ENCODE measurements at regions of chr20 and their contacts with region 1.

Region 1: DNA sequence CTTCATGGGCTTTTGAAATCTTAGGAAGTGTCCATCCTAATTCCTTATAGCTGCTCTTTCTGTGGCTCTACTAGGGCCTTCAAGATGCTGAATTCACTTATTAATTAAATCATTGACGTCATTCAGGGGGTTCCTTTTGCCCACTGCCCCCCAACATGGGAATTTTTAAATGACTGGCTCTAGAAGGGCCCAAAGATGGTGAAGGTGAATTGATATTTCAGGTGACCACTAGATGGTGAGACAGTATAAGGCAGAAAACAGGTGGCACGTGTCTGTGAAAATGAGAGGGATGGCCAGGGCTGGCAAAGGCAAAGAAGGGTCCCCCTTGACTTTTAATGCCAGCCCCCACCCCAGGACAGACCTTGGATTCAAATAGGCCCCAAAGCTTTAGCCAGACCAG is 11.8 kb downstream of the GNAS start:
- DNase-seq: no peak
- ATAC-seq: peak; percentile 57 to 77; a peak in 3 of 6 replicates
- H3K4me3 ChIP-seq: no peak overlapping the region
- H3K27ac ChIP-seq: no peak overlapping the region
- H3K4me1 ChIP-seq: no peaks in the 10 kb centered on the region
- CTCF ChIP-seq: peak; percentile 40
- EP300 ChIP-seq: no peak
- POLR2A ChIP-seq: no peak
- RAD21 ChIP-seq: peak; percentile 59 to 63

Region 2: GRCh38 chr20:58875541-58876134 is 11.3 kb after region 1 on chr20:
- CTCF ChIA-PET with region 1: interaction called, 41 read pairs
- POLR2A ChIA-PET with region 1: no interaction called
- DNase-seq: no peak
- ATAC-seq: no peak
- H3K4me3 ChIP-seq: no peak overlapping the region
- H3K27ac ChIP-seq: no peak overlapping the region
- H3K4me1 ChIP-seq: no peaks in the 10 kb centered on the region
- CTCF ChIP-seq: no peak
- EP300 ChIP-seq: no peak
- POLR2A ChIP-seq: no peak
- RAD21 ChIP-seq: no peak

Measured in A549 (cell line).